ENCODE measurements at regions of chr3 and their contacts with region 1.

Region 1: DNA sequence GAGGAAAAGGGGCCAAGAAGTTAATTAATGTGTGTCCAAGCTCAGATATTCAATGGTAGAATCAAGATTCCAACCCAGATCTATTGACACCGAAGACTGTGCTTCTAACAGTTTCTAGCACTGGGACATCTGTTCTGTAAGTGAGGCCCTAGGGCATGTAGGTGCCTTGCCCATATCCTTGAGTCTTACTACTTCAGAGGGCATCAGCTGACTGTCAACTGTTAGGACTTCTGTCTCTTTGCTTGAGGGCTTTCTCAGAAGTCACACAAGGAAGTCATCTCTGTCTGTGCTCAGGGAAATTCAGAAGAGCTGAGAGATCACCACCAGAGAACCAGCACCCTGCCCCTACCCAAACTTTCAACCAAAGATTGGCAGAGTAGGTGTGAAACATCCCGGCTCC is 403.6 kb upstream of the PROK2 start:
- DNase-seq: no peak
- ATAC-seq: no peak
- H3K4me3 ChIP-seq: no peak overlapping the region
- H3K4me3 Mint-ChIP-seq: no peak overlapping the region
- H3K27ac ChIP-seq: no peak overlapping the region
- H3K27ac Mint-ChIP-seq: no peak overlapping the region
- H3K4me1 ChIP-seq: peaks cover 27 to 29% of the 10 kb centered on the region in 2 donors
- H3K4me1 Mint-ChIP-seq: peaks cover 27% of the 10 kb centered on the region
- H3K27me3 ChIP-seq: peaks cover 0 to 7% (median 0%) of the 10 kb centered on the region in 4 experiments
- H3K27me3 Mint-ChIP-seq: peaks cover 4% of the 10 kb centered on the region
- CTCF ChIP-seq: no peak

Region 2: DNA sequence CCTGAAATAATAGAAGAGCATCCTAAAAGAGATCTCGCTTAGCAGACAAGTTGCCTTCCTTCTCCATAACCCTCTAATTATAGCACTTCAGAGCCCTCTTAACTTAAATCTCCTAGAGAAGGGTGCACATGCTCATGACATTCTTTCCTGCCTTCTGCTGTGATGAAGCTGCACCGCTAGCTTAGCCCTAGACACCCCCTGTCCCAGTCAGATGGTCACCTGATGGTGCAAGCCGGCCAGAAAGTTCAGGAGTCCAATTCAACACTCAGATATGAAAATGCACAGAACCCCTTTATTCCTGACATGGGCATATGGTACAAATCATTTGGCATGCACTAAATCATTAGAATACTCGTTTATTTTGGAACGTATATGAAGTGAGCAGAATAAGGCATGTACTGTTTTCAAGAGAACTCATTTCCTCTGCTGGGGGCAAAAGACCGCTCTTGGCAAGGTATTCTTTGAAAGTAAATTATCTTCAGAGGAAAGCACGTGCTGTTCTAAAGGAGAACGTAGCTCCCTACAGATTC is 16.9 kb after region 1 on chr3:
- CTCF ChIA-PET with region 1: no interaction called
- POLR2A ChIA-PET with region 1: no interaction called
- intact Hi-C with region 1: loop called (anchors 1 kb)
- DNase-seq: no peak
- ATAC-seq: no peak
- H3K4me3 ChIP-seq: no peak overlapping the region
- H3K4me3 Mint-ChIP-seq: no peak overlapping the region
- H3K27ac ChIP-seq: no peak overlapping the region
- H3K27ac Mint-ChIP-seq: no peak overlapping the region
- H3K4me1 ChIP-seq: peaks cover 0 to 4% of the 10 kb centered on the region in 2 donors
- H3K4me1 Mint-ChIP-seq: peaks cover 2% of the 10 kb centered on the region
- H3K27me3 ChIP-seq: peaks cover 0 to 12% (median 5%) of the 10 kb centered on the region in 4 experiments
- H3K27me3 Mint-ChIP-seq: peaks cover 35% of the 10 kb centered on the region
- CTCF ChIP-seq: no peak

Measured in B cell (primary cell).